Activated T-helper 2 cell treated with anti-CD3 and anti-CD28 coated beads, Interferon-gamma antibody, Interleukin-2, Interleukin-4, amounts not matched to agents 10 μg/mL and 5 μg/mL and 100 μg/mL, durations not matched to agents 14 hours and 24 hours and 36 hours (primary cell): ENCODE measurements at regions of chr3 and their contacts with region 1.

Region 1: DNA sequence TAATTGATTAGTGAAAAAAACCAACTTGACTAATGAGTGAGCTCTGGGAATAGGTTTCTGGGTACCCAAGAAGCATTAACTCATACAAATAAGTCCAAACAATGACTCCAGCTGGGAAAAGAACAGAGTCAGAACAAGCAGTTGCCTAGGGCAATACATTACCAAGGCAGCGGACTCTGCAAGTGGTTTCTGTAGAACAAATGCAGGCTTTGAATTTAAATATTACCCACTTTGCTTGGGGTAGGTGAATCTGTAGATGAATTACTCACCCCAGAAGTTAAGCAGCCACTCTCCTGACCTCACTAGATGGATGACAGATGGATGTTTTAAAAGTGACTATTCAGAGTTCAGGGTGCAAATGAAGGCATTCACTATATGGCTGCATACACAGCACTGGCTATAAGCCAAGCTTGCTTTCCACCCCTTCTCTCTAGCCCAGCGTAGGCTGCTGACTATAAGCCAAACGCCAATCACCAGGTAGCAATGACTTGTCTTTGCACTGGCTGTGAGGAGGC is 73.1 kb upstream of the BHLHE40 start:
- DNase-seq: no peak
- H3K4me3 Mint-ChIP-seq: peak overlapping the region; percentile 57
- H3K27ac Mint-ChIP-seq: peak overlapping the region; percentile 91
- H3K4me1 Mint-ChIP-seq: peaks cover 93% of the 10 kb centered on the region
- H3K27me3 Mint-ChIP-seq: no peaks in the 10 kb centered on the region

Region 2: DNA sequence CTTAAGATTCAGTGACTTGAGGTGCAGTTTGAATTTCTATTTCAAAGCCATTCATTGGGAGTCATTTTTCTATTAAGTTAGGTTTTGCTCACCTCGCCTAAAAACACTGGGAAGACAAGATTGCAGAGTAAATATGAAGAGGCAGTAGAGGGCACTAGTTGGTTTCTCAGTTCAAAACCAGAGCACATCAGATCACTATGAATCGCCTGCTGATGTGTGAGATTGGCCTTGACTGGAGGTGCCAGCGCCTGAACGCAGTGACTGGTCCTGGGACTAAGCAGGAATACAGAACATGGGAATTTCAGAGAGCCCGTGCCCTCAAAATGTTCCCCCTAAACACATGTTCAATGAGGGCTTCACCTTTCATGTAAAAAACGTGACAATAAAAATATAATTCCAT is 184.1 kb before region 1 on chr3:
- intact Hi-C with region 1: loop called (anchors 5 kb)
- DNase-seq: peak; percentile 23
- H3K4me3 Mint-ChIP-seq: no peak overlapping the region
- H3K27ac Mint-ChIP-seq: peak overlapping the region; percentile 63
- H3K4me1 Mint-ChIP-seq: peaks cover 53% of the 10 kb centered on the region
- H3K27me3 Mint-ChIP-seq: no peaks in the 10 kb centered on the region

Region 3: DNA sequence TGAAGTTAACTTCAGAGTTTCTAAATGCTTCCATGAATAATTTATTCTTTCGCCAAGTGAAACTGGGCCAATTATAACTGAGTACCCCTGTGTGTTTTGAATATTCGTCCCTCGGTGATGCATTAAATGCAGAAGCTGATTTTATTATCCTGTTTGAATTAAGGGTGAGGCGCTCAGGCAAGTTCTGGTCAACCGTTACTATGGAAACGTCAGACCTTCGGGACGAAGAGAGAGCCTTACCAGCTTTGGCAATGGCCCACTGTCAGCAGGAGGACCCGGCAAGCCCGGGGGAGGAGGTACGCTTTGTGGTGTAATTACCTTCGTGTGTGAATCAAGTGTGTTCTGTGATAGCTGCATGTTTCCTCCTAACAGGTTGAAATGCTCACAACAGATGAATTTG is 173.2 kb before region 1 on chr3:
- intact Hi-C with region 1: no loop called
- DNase-seq: no peak
- H3K4me3 Mint-ChIP-seq: no peak overlapping the region
- H3K27ac Mint-ChIP-seq: no peak overlapping the region
- H3K4me1 Mint-ChIP-seq: peaks cover 67% of the 10 kb centered on the region
- H3K27me3 Mint-ChIP-seq: no peaks in the 10 kb centered on the region

Region 4: GRCh38 chr3:4834403-4834866 is 71.7 kb before region 1 on chr3:
- intact Hi-C with region 1: loop called (anchors 1 kb)
- DNase-seq: peak; percentile 74
- H3K4me3 Mint-ChIP-seq: peak overlapping the region; percentile 74
- H3K27ac Mint-ChIP-seq: peak overlapping the region; percentile 96
- H3K4me1 Mint-ChIP-seq: peaks cover 80% of the 10 kb centered on the region
- H3K27me3 Mint-ChIP-seq: no peaks in the 10 kb centered on the region

Region 5: DNA sequence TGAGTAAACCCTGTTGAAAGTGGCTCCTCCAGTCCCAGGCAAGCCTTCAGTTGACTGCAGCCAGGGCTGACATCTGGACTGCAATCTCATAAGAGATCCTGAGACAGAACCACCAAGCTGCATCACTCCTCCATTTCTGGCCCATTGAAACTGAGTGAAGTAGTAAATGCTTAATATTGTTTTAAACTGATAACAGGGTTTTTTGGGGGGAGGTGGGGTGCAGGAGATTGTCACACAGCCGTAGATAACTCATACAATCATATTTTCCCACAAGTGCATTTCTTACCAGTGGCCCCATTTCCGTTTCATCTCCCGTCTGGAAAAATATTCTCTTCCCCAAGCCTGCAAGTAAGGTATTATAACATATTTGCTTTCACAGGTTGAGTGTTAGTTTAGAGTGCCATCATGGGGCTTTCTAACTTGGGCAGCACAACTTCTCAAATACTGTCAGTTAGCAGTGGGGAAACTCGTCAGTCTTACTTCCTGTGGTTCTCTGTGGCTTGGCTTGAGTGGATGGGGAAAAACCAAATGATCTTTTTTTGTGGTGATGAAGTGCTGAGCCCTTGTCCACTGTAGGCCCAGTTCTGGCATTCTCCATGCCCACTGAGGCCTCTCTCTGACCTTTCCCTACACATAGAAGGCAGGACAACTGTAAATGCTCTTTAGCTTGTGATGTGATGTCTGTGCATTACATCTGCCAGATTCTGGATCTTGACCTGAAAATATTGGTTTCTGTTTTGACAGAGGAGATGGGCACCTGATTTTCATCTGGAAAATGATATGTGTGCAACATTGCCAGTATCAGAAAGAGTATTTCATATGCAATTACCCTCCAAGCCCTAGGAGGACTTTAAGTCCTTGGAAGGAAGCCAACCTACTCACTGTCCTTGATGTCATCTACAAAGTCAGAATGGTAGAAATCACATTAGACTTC is 17.0 kb before region 1 on chr3:
- intact Hi-C with region 1: loop called (anchors 1 kb)
- DNase-seq: peak; percentile 34
- H3K4me3 Mint-ChIP-seq: peak overlapping the region; percentile 17
- H3K27ac Mint-ChIP-seq: peak overlapping the region; percentile 91
- H3K4me1 Mint-ChIP-seq: peaks cover 58% of the 10 kb centered on the region
- H3K27me3 Mint-ChIP-seq: no peaks in the 10 kb centered on the region

Region 6: GRCh38 chr3:4935347-4935746 is 29.2 kb after region 1 on chr3:
- intact Hi-C with region 1: loop called (anchors 1 kb)
- DNase-seq: no peak
- H3K4me3 Mint-ChIP-seq: no peak overlapping the region
- H3K27ac Mint-ChIP-seq: no peak overlapping the region
- H3K4me1 Mint-ChIP-seq: peaks cover 25% of the 10 kb centered on the region
- H3K27me3 Mint-ChIP-seq: no peaks in the 10 kb centered on the region

Region 7: DNA sequence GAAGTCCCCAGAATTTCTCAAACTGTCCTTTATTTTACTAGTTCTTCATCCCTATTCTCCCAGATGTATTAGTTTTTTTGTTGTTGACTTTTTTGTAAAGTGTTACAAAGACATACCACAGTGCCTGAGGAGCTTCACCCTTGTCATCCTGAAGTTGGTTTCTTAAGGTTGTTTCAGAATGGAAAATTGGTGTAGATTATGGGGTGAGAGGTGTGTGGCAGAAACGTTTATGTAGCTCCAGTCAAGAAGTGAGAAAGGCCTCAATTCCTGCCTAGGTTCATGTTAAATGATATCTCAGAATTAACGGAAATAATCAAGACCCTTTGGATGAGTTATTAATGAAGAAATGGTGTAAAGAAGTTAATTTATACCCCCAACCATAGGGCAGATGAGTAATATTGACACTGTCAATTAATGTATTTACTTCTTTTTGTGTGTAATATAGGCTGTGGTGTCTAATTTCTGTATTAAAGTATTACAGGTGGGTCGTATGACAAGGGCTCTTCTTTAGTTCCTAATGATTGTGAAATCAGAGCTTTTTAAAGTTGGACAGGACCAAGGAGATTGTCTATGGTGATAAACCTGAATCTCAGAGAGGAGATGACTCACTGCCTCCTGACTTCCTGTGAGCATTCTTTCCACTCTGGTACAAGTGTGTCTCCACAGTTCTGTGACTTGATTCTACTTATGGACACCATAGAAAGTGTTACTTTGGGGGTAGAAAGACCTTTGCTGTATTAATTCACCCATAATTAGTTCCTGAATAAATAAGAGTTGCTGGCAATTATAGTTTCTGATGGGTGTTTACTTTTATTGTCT is 288.4 kb after region 1 on chr3:
- intact Hi-C with region 1: loop called (anchors 5 kb)
- DNase-seq: peak; percentile 47
- H3K4me3 Mint-ChIP-seq: peak overlapping the region; percentile 62
- H3K27ac Mint-ChIP-seq: peak overlapping the region; percentile 94
- H3K4me1 Mint-ChIP-seq: peaks cover 85% of the 10 kb centered on the region
- H3K27me3 Mint-ChIP-seq: no peaks in the 10 kb centered on the region

Region 8: GRCh38 chr3:5250467-5251195 is 344.5 kb after region 1 on chr3:
- intact Hi-C with region 1: no loop called
- DNase-seq: no peak
- H3K4me3 Mint-ChIP-seq: no peak overlapping the region
- H3K27ac Mint-ChIP-seq: no peak overlapping the region
- H3K4me1 Mint-ChIP-seq: no peaks in the 10 kb centered on the region
- H3K27me3 Mint-ChIP-seq: no peaks in the 10 kb centered on the region